ENCODE measurements at regions of chr19 and their contacts with region 1.

Region 1: GRCh38 chr19:11798391-11799330 is at the start of gene ZNF491:
- DNase-seq: peak; percentile 95
- H3K4me3 Mint-ChIP-seq: peak within 1 kb of the TSS; percentile 84
- H3K27ac Mint-ChIP-seq: peak within 1 kb of the TSS; percentile 67
- H3K4me1 Mint-ChIP-seq: peaks cover 12% of the 10 kb centered on the region
- H3K27me3 Mint-ChIP-seq: peaks cover 2% of the 10 kb centered on the region
- total RNA-seq, gene ZNF491: 0.35 to 1.2 TPM

Region 2: GRCh38 chr19:11814029-11814699 is 15.5 kb after region 1 on chr19 and contains the start of gene ZNF440:
- CTCF ChIA-PET with region 1: interaction called, 40 read pairs
- intact Hi-C with region 1: loop called (anchors 1 kb)
- DNase-seq: peak; percentile 93
- H3K4me3 Mint-ChIP-seq: peak within 1 kb of the TSS; percentile 88
- H3K27ac Mint-ChIP-seq: peak within 1 kb of the TSS; percentile 66
- H3K4me1 Mint-ChIP-seq: peaks cover 21% of the 10 kb centered on the region
- H3K27me3 Mint-ChIP-seq: no peaks in the 10 kb centered on the region
- total RNA-seq, gene ZNF440: 3.6 to 4.8 TPM

Region 3: DNA sequence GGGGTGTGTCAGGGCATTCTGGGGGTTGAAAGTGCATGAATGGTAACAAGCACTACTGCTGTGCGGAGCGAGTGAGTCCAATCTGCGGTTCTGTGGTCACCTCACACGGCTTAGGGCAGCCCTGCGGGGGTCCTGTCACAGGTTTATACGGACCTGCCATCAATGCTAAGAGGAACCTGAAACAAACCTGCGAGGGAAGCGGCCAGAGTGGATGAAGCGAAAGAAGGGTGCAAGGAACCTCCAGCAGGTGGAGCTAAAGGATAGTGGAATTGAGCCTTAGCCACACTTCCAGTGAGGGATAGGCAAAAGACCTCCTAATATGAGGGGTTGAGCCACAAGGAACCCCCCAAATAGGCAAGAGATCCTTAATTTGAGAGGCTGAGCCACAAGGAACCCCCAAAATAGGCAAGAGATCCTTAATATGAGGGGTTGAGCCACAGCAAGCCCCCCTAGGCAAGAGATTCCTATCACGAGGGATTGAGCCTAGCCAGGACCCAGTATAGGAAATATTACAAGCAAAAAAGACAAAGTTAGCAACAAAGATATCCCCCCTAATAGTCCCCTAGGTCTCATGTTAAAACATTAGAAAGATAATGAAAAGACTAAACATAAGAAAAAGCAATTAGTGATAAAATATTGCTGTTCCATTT is 82.6 kb after region 1 on chr19:
- CTCF ChIA-PET with region 1: interaction called, 19 read pairs
- intact Hi-C with region 1: loop called (anchors 1 kb)
- DNase-seq: peak; percentile 78
- H3K4me3 Mint-ChIP-seq: no peak overlapping the region
- H3K27ac Mint-ChIP-seq: no peak overlapping the region
- H3K4me1 Mint-ChIP-seq: no peaks in the 10 kb centered on the region
- H3K27me3 Mint-ChIP-seq: no peaks in the 10 kb centered on the region

Region 4: DNA sequence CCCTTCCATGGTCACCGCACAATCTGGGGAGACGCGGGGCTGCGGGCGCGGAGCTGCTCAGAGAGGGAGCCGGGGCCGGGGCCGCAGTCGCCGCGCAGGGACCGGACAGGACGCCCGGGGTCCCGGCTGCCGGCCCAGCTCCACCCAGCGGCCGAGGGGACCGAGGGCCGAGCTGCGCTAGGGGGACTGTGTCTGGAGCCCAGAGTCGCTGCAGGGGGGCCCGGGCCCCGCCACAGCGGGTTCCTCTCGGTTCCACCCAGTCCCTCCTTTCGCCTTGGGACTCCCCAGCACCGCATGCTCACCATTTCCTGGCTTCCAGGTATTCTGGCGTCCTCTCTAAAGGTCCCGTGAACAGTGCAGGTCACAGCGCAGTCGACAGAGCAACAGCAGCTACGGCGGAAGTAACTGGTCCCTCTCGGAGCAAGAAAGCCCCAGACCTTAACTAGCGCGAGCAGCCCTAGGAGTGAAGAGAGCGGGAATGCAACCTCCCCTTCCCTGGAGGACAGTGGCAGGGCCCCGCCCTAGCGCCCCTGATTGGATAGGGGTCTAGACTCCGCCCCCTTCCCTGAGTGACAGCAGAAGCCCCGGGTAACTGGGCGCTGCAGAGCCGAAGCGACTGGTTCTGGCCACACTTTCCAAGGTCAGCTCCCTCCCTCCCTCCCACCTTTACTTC is 254.0 kb after region 1 on chr19 and contains the start of gene ZNF878:
- CTCF ChIA-PET with region 1: interaction called, 6 read pairs
- intact Hi-C with region 1: loop called (anchors 2 kb)
- DNase-seq: peak; percentile 80
- H3K4me3 Mint-ChIP-seq: peak within 1 kb of the TSS; percentile 80
- H3K27ac Mint-ChIP-seq: no peak within 1 kb of the TSS
- H3K4me1 Mint-ChIP-seq: peaks cover 9% of the 10 kb centered on the region
- H3K27me3 Mint-ChIP-seq: peaks cover 19% of the 10 kb centered on the region
- total RNA-seq, gene ZNF878: 0.38 to 0.49 TPM